ENCODE measurements at regions of chr3 and their contacts with region 1.

Region 1: DNA sequence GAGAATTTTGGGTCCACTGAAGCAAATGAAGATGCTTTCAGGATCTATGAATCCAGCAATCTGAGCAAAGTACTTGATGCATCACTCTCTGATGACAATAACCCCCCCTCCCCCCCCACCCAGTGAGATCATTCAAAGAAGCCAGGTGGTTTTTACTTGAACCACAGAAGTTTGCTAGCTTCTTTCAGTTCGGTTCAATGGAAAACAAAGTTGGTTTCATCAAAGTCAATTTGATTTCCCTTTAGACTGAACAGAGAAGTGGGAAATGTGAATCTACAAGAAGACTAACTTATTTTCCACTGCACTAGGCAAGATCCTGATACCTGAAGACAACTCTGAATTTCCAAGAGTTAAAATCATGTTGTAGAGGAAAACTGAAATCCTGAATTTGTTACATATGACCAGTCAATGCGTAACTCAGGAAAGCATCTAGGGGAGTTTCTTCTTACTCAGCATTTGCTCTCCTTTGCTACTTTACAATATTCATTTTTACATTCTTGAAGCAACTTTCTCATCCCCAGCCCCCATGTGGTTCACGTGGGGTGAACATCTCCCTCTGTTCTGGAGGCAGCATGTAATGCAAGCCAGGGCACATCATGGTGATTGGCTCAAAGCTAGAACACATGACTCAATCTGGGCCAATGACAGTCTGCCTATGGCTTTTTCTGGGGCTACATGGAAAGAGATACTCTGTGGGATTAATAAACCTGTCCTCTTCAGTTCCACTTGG is 572.6 kb downstream of the FOXP1 start:
- DNase-seq: peak; percentile 87
- H3K4me3 Mint-ChIP-seq: peak overlapping the region; percentile 56
- H3K27ac Mint-ChIP-seq: peak overlapping the region; percentile 92
- H3K4me1 Mint-ChIP-seq: peaks cover 68% of the 10 kb centered on the region
- H3K27me3 Mint-ChIP-seq: no peaks in the 10 kb centered on the region

Region 2: DNA sequence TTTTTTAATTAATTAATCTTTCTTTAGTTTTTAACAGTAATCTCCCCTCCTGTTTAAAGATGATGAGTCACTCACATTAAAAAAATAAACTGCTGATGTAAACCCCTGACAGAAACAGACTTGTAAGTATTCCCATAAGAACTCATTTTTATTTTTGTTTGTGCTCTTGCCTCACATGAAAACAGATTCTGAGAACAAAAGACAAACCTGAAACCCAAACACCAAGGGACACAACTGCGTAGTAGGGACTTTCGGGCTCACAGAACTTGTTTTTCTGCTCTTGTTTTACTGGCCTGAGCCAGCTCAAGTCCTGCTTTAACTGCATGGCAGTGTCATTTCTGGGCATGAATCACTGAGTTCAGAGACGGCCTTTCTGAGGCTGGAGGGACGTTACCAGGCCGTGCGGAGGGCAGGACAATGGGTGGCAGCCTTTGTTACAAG is 28.2 kb before region 1 on chr3:
- CTCF ChIA-PET with region 1: interaction called, 3 read pairs
- POLR2A ChIA-PET with region 1: no interaction called
- intact Hi-C with region 1: loop called (anchors 1 kb)
- DNase-seq: peak; percentile 70
- H3K4me3 Mint-ChIP-seq: peak overlapping the region; percentile 57
- H3K27ac Mint-ChIP-seq: peak overlapping the region; percentile 99
- H3K4me1 Mint-ChIP-seq: peaks cover 64% of the 10 kb centered on the region
- H3K27me3 Mint-ChIP-seq: no peaks in the 10 kb centered on the region

Region 3: DNA sequence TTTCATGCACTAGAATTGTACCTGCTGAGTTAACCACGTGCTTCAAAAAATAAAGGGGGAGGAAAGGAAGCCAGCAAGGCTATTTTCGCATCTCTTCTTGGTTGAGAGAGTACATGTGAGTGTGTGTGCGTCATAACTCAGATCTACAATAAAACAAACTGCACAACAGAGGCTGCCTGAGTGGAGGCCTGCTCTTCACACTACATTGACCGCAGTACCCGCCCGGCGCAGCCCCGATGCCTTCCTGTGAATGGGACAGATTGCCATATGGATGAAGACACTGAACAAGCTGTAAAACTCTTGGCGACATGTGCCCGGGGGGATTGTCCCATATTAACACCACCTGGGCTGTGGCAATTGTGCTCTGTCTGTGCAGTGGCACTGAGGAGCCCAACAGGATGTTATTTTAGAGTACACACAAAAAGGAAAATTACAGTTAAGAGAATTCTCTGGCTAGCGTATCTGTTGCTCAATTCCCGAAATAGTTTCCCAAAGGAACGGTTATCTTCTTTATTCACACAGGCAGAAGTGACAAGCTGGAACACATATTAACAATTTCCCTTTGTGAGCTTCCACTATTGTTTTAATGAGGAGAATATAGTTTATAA is 21.1 kb after region 1 on chr3:
- CTCF ChIA-PET with region 1: interaction called, 3 read pairs
- POLR2A ChIA-PET with region 1: interaction called, 4 read pairs
- intact Hi-C with region 1: loop called (anchors 2 kb)
- DNase-seq: no peak
- H3K4me3 Mint-ChIP-seq: no peak overlapping the region
- H3K27ac Mint-ChIP-seq: peak overlapping the region; percentile 71
- H3K4me1 Mint-ChIP-seq: peaks cover 85% of the 10 kb centered on the region
- H3K27me3 Mint-ChIP-seq: no peaks in the 10 kb centered on the region

Region 4: GRCh38 chr3:71087143-71088018 is 76.5 kb after region 1 on chr3:
- CTCF ChIA-PET with region 1: interaction called, 3 read pairs
- POLR2A ChIA-PET with region 1: no interaction called
- intact Hi-C with region 1: loop called (anchors 1 kb)
- DNase-seq: peak; percentile 62
- H3K4me3 Mint-ChIP-seq: peak overlapping the region; percentile 38
- H3K27ac Mint-ChIP-seq: peak overlapping the region; percentile 81
- H3K4me1 Mint-ChIP-seq: peaks cover 88% of the 10 kb centered on the region
- H3K27me3 Mint-ChIP-seq: no peaks in the 10 kb centered on the region

Region 5: DNA sequence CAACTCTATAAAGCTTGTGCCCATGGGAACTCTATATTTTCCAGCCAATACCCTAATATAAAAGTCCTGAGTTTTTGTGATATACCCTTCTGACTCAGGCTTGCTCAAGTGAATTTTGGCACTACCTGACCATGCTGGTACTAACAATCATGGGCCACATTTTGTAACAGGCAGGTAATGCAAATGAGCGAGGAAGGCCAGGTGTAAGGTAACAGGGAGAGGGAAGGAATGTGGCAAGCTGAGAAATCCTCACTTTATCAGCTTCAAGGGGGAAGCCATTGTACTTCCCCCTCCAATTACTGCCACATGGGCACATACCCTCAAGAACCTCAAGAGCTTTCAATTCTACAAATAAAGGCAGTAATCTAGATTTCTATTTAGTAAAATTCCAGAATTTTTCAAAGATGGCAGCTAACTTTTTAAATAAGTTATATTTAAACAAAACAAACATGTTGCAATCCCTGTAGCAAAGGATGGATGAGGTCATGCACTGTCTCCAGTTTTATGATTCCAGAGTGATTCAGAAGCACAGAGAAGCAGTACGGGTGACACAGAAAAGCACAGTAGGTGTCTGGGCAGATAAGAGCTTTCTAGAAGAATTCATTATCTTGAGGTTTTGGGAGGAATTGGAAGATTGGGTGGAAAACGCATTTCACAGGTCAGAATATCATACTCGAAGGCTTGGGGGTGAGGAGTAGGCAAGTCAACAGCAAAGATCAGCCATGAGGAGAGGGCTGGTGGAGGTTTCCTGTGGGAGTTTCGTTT is 485.0 kb after region 1 on chr3:
- CTCF ChIA-PET with region 1: no interaction called
- POLR2A ChIA-PET with region 1: no interaction called
- intact Hi-C with region 1: loop called (anchors 5 kb)
- DNase-seq: peak; percentile 62
- H3K4me3 Mint-ChIP-seq: peak overlapping the region; percentile 58
- H3K27ac Mint-ChIP-seq: peak overlapping the region; percentile 77
- H3K4me1 Mint-ChIP-seq: peaks cover 73% of the 10 kb centered on the region
- H3K27me3 Mint-ChIP-seq: no peaks in the 10 kb centered on the region